BJ (cell line): ENCODE measurements at regions of chr16 and their contacts with region 1.

Region 1: GRCh38 chr16:27109666-27110523 is 43.2 kb downstream of the C16orf82 start:
- DNase-seq: peak; percentile 9
- H3K4me3 ChIP-seq: peak overlapping the region; percentile 45
- H3K27me3 ChIP-seq: no peaks in the 10 kb centered on the region
- CTCF ChIP-seq: peak; percentile 73

Region 2: DNA sequence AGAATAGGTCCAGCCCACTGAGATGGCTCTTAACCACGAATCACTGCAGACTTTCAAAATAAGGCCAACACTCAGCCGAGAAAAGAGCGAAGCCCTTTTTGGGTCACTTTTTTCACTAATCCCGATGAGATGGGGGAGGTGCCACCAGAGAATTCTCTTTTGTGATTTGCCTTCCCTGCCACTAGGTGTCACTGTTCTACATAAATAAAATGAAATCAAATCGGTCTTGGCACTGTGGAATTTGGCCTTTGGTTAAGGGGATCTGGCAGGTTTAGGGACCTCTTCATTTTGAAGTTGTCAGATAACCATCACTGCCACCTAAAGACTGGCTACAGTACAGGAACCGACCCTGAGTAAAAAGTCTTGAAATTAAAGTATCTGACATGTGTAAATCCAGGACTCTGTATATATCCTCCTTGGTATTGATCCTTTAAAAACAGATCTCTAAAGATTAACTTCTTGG is 1271.1 kb before region 1 on chr16:
- CTCF ChIA-PET with region 1: interaction called, 17 read pairs
- POLR2A ChIA-PET with region 1: no interaction called
- DNase-seq: peak; percentile 4
- H3K4me3 ChIP-seq: no peak overlapping the region
- H3K27me3 ChIP-seq: no peaks in the 10 kb centered on the region
- CTCF ChIP-seq: peak; percentile 73

Region 3: GRCh38 chr16:26930786-26931581 is 178.9 kb before region 1 on chr16:
- CTCF ChIA-PET with region 1: interaction called, 4 read pairs
- POLR2A ChIA-PET with region 1: interaction called, 11 read pairs
- DNase-seq: no peak
- H3K4me3 ChIP-seq: no peak overlapping the region
- H3K27me3 ChIP-seq: no peaks in the 10 kb centered on the region
- CTCF ChIP-seq: no peak

Region 4: DNA sequence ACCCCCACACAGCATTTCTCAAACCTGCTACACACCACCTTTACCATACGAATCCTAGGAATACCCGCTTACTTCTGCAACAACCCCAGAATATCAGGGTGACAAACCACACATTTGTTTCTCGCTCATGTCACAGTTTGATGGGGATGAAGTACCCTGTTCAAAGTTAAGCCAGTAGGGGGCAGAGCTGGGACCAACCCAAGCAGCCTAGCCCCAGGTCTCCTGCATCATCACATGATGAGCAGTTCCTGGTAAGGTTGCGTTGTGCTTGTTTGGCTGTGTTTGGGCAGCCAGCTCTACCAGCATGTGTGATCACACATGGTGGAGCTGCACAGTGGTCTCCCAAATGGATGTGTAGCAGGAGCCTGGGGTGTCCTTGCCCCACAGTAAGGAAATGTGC is 146.8 kb before region 1 on chr16:
- CTCF ChIA-PET with region 1: interaction called, 12 read pairs
- POLR2A ChIA-PET with region 1: no interaction called
- DNase-seq: no peak
- H3K4me3 ChIP-seq: no peak overlapping the region
- H3K27me3 ChIP-seq: no peaks in the 10 kb centered on the region; the same call in 1 of the 2 replicates
- CTCF ChIP-seq: peak; percentile 57

Region 5: DNA sequence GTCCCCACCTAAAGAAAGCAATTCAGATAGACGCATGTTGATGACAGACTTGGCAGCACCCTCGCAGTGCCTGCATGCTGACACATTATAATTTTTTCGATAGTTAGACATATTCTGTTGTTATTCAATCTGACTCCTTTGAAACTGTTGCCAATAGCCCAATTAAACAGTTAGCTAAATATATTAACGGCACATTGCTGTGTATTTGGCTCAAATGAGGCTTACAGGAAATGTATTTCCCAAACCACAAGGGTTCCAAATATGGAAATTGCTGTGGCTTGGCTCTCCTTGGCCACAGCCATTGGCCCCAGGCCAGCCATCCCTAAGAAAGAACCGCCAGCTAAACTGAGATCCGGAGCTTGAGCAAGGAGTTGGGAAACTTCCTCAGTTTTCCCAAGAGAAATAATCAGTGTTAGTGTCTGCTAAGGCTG is 12.1 kb before region 1 on chr16:
- CTCF ChIA-PET with region 1: interaction called, 10 read pairs
- POLR2A ChIA-PET with region 1: no interaction called
- DNase-seq: no peak
- H3K4me3 ChIP-seq: no peak overlapping the region
- H3K27me3 ChIP-seq: no peaks in the 10 kb centered on the region
- CTCF ChIP-seq: no peak

Region 6: GRCh38 chr16:27127308-27127707 is 17.4 kb after region 1 on chr16:
- CTCF ChIA-PET with region 1: interaction called, 11 read pairs
- POLR2A ChIA-PET with region 1: no interaction called
- DNase-seq: peak; percentile 22
- H3K4me3 ChIP-seq: no peak overlapping the region
- H3K27me3 ChIP-seq: no peaks in the 10 kb centered on the region
- CTCF ChIP-seq: no peak

Region 7: DNA sequence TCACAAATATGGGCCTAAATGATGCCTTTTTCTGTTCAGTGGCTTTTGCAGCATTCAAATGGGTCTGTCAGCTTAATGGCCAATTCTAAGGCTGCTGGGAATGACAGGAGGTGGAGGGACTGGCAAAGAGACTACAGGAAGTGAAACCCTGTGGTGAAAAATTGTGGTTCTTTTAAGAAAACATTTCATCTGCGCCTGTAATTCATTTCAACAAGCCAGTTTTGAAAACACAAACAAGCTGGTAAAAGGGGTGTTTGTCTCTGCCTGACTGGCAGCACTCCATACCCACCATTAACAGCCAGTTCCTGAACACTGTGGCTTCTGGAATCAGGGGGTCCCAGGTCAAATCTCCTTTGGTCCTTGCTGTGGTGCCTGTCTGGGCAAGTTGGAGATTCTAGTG is 89.8 kb after region 1 on chr16:
- CTCF ChIA-PET with region 1: no interaction called
- POLR2A ChIA-PET with region 1: no interaction called
- DNase-seq: no peak
- H3K4me3 ChIP-seq: no peak overlapping the region
- H3K27me3 ChIP-seq: peaks cover 2% of the 10 kb centered on the region; the same call in 1 of the 2 replicates
- CTCF ChIP-seq: no peak

Region 8: DNA sequence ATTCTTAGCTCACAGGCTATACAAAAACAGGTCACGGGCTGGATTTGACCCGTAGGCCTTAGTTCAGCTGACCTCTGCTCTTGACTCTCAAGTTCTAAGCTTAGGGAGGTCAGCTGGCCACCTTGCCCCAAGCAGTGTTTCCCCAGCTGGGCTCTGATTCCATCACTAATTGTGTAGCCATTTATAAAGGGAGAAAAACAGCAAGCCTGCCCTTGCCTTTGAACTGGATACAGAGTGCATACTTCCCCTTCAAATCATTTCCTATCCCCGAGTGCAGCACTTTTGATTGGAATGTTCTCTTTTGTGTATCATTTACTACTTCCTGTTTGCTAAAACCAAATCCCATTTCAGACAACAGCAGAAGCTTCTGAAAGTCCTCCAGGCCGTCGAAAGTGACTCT is 593.6 kb after region 1 on chr16:
- CTCF ChIA-PET with region 1: no interaction called
- POLR2A ChIA-PET with region 1: interaction called, 13 read pairs
- DNase-seq: no peak
- H3K4me3 ChIP-seq: no peak overlapping the region
- H3K27me3 ChIP-seq: no peaks in the 10 kb centered on the region
- CTCF ChIP-seq: no peak